ENCODE measurements at regions of chr2 and their contacts with region 1.

Region 1: GRCh38 chr2:69914170-69914960 is 544 bp upstream of the MXD1 start:
- DNase-seq: peak; percentile 99 to 100 (median 100)
- H3K4me3 ChIP-seq: peak overlapping the region; percentile 89
- H3K4me3 Mint-ChIP-seq: peak overlapping the region; percentile 81 to 92 (median 88)
- H3K27ac ChIP-seq: peak overlapping the region; percentile 94
- H3K27ac Mint-ChIP-seq: peak overlapping the region; percentile 78 to 97 (median 92)
- H3K4me1 ChIP-seq: peaks cover 12% of the 10 kb centered on the region
- H3K4me1 Mint-ChIP-seq: peaks cover 24 to 44% (median 39%) of the 10 kb centered on the region in 3 donors
- H3K27me3 ChIP-seq: no peaks in the 10 kb centered on the region
- H3K27me3 Mint-ChIP-seq: no peaks in the 10 kb centered on the region

Region 2: GRCh38 chr2:69893684-69894551 is 20.4 kb before region 1 on chr2 and contains the start of gene SNRNP27:
- CTCF ChIA-PET with region 1: interaction called, 5 read pairs
- POLR2A ChIA-PET with region 1: interaction called, 12 read pairs
- DNase-seq: peak; percentile 66 to 85 (median 75)
- H3K4me3 ChIP-seq: peak within 1 kb of the TSS; percentile 75
- H3K4me3 Mint-ChIP-seq: peak within 1 kb of the TSS; percentile 97 to 100 (median 100)
- H3K27ac ChIP-seq: peak within 1 kb of the TSS; percentile 84
- H3K27ac Mint-ChIP-seq: peak within 1 kb of the TSS; percentile 92 to 99 (median 98)
- H3K4me1 ChIP-seq: peaks cover 27% of the 10 kb centered on the region
- H3K4me1 Mint-ChIP-seq: peaks cover 39 to 57% (median 46%) of the 10 kb centered on the region in 3 donors
- H3K27me3 ChIP-seq: no peaks in the 10 kb centered on the region
- H3K27me3 Mint-ChIP-seq: peaks cover 0 to 2% of the 10 kb centered on the region in 2 donors
- total RNA-seq, gene SNRNP27: 59.6 to 61.2 TPM

Region 3: DNA sequence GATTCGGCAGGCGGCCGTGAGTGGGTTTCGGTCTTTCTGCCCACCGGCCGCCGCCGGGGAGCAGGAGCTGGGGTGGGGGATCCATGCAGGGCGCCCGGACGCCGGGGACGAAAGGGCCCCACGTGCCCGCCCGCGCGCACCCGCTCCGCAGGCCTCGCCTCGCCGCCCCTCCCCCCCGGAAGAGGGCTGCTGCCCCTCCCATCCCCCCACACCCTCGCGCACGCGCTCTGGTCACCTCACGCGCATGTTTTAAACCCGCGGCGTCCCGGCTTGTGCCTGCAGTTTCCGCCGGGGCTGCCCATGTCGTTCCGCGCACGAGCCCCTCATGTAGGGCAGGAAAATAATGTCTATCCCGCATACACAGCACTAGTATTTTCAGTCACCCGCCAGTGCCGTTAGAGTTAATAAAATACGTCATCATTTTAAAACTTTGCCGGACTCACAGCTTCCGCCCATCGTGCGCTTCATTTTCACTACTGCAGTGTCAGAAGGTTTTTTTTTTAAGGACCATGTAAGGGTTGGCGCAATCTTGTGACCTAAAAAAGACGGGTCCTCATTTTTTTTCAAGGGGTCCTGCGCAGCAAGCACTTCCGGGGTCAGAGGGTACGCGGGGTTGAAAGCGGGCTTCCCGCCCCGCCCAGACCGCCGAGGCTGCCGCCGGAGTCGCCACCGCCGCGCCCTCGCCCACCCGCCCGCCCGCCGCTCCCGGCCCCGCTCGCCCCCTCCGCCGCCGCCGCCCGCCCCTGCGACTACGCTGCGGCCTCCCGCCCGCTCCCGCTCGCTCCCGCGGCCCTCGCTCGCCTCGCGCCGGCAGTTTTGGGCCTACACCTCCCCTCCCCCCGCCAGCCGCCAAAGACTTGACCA is 172.7 kb after region 1 on chr2 and contains the start of gene PCBP1:
- CTCF ChIA-PET with region 1: interaction called, 12 read pairs
- POLR2A ChIA-PET with region 1: interaction called, 81 read pairs
- DNase-seq: peak; percentile 92 to 98 (median 98)
- H3K4me3 ChIP-seq: peak within 1 kb of the TSS; percentile 95
- H3K4me3 Mint-ChIP-seq: peak within 1 kb of the TSS; percentile 94 to 99 (median 96)
- H3K27ac ChIP-seq: peak within 1 kb of the TSS; percentile 99
- H3K27ac Mint-ChIP-seq: peak within 1 kb of the TSS; percentile 100
- H3K4me1 ChIP-seq: peaks cover 65% of the 10 kb centered on the region
- H3K4me1 Mint-ChIP-seq: peaks cover 65 to 79% (median 77%) of the 10 kb centered on the region in 3 donors
- H3K27me3 ChIP-seq: no peaks in the 10 kb centered on the region
- H3K27me3 Mint-ChIP-seq: peaks cover 0 to 5% of the 10 kb centered on the region in 2 donors
- total RNA-seq, gene PCBP1: 428 to 434 TPM

Region 4: DNA sequence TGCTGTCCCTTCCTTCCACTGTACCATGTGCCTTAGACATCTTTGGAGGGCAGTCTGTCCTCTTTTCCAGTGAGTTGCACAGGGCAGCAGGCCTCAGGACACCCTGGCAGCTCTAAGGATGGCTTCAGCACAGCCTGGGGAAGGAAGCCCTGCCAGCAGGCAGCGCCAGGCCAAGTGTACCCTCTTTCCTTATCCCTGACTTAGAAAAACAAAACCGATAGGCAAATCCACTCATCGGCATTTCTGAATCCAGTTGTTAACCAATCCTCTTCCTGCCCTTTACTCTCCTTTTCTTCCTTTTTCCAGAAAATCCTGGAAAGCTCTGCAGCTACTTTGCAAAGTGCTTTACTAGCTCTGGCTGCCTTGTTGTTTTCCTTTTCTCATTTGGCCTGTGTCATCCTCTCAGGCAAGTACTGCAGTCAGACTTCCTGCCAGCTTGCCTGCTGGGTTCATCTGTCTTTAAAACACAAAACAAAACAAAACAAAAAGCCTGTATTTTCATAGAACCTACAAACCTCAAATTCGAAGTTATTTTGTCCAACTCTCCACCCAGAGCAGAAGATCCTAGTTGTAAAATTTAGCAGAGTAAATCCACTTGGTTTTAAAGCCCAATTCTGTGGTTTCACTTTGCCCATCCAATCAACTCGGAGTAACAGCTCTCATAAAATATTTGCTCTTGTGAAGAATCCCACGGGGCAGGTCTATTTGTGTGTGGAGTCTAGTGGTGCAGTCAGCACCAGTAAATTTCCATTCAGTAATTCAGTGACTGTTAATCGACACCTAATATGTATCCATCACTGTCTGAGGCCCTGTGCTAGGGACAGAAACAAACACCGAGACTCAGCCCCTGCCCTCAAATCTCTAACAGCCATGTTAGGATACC is 218.1 kb after region 1 on chr2:
- CTCF ChIA-PET with region 1: no interaction called
- POLR2A ChIA-PET with region 1: interaction called, 16 read pairs
- DNase-seq: peak in 4 of 5 donors; percentile 19 to 72 (median 56)
- H3K4me3 ChIP-seq: peak overlapping the region; percentile 57
- H3K4me3 Mint-ChIP-seq: peak overlapping the region; percentile 75 to 91 (median 84)
- H3K27ac ChIP-seq: peak overlapping the region; percentile 79
- H3K27ac Mint-ChIP-seq: peak overlapping the region; percentile 94 to 99 (median 96)
- H3K4me1 ChIP-seq: peaks cover 86% of the 10 kb centered on the region
- H3K4me1 Mint-ChIP-seq: peaks cover 66 to 86% (median 85%) of the 10 kb centered on the region in 3 donors
- H3K27me3 ChIP-seq: no peaks in the 10 kb centered on the region
- H3K27me3 Mint-ChIP-seq: no peaks in the 10 kb centered on the region

Region 5: GRCh38 chr2:70190418-70191243 is 276.3 kb after region 1 on chr2 and contains the start of gene C2orf42:
- CTCF ChIA-PET with region 1: interaction called, 10 read pairs
- POLR2A ChIA-PET with region 1: interaction called, 32 read pairs
- DNase-seq: peak; percentile 86 to 97 (median 96)
- H3K4me3 ChIP-seq: peak within 1 kb of the TSS; percentile 82
- H3K4me3 Mint-ChIP-seq: peak within 1 kb of the TSS; percentile 90 to 98 (median 95)
- H3K27ac ChIP-seq: peak within 1 kb of the TSS; percentile 93
- H3K27ac Mint-ChIP-seq: peak within 1 kb of the TSS; percentile 96 to 100 (median 99)
- H3K4me1 ChIP-seq: peaks cover 5% of the 10 kb centered on the region
- H3K4me1 Mint-ChIP-seq: peaks cover 17 to 22% (median 22%) of the 10 kb centered on the region in 3 donors
- H3K27me3 ChIP-seq: no peaks in the 10 kb centered on the region
- H3K27me3 Mint-ChIP-seq: peaks cover 0 to under 1% of the 10 kb centered on the region in 2 donors
- total RNA-seq, gene C2orf42: 29.1 to 34.6 TPM

Region 6: DNA sequence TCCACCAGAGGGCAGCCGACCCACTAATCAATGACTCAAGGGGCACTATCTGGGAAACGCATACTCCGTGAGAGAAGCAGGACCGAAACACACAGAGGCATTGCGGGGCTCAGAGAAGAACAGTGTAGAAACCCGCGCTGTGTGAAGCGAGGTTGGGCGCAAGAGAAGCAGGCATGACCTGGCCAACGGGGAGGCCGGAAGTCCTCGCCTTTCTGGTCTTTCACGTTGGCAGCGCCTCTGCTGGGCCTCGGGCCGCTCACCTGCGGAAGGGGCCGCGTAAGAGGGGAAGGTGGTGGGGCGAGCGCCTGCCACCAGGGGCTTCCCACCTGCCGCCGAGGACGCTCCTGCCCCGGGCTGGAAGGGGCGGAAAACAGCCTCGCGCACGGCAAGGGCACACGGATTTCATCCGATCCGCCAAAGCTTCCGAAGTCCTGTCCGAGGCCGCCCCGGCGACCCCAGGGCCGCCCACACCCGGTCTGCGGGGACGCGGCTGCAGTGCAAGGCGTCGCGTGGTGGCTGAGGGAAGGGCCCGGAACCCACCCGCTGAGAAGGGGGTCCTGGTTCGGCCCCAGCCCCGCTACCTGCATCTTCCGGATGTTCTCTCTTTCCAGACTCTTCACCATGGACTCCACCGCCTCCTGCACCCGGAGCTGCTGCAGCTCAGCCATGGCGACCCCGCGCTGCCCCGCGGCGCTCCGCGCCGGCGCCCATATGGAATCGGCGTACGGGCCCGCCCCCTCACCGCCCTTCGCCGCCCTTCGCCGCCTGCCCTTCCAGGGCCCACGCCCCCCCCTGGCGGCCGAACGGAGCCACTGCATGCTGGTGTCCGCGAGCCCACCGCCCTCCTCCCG is 387.2 kb after region 1 on chr2 and contains the start of gene FAM136A:
- CTCF ChIA-PET with region 1: interaction called, 49 read pairs
- POLR2A ChIA-PET with region 1: interaction called, 9 read pairs
- DNase-seq: peak; percentile 84 to 91 (median 86)
- H3K4me3 ChIP-seq: peak within 1 kb of the TSS; percentile 85
- H3K4me3 Mint-ChIP-seq: peak within 1 kb of the TSS; percentile 89 to 96 (median 92)
- H3K27ac ChIP-seq: peak within 1 kb of the TSS; percentile 79
- H3K27ac Mint-ChIP-seq: peak within 1 kb of the TSS; percentile 73 to 96 (median 88)
- H3K4me1 ChIP-seq: peaks cover 19% of the 10 kb centered on the region
- H3K4me1 Mint-ChIP-seq: peaks cover 27 to 44% (median 34%) of the 10 kb centered on the region in 3 donors
- H3K27me3 ChIP-seq: no peaks in the 10 kb centered on the region
- H3K27me3 Mint-ChIP-seq: no peaks in the 10 kb centered on the region
- total RNA-seq, gene FAM136A: 99.4 to 102 TPM